PC-9 (cell line): ENCODE measurements at regions of chr20 and their contacts with region 1.

Region 1: GRCh38 chr20:31879143-31879987 is 8.9 kb downstream of the TTLL9 start:
- DNase-seq: peak; percentile 75 to 95
- H3K4me3 ChIP-seq: peak overlapping the region; percentile 60
- H3K27ac ChIP-seq: no peak overlapping the region
- H3K4me1 ChIP-seq: peaks cover 10% of the 10 kb centered on the region; the same call in 1 of the 2 replicates
- H3K27me3 ChIP-seq: peaks cover 15% of the 10 kb centered on the region
- CTCF ChIP-seq: no peak; the same call in 1 of the 2 replicates

Region 2: GRCh38 chr20:32554965-32555289 is 675.6 kb after region 1 on chr20:
- CTCF ChIA-PET with region 1: no interaction called
- POLR2A ChIA-PET with region 1: interaction called, 15 read pairs
- intact Hi-C with region 1: no loop called
- DNase-seq: no peak
- H3K4me3 ChIP-seq: no peak overlapping the region
- H3K27ac ChIP-seq: peak overlapping the region; percentile 61
- H3K4me1 ChIP-seq: peaks cover 18% of the 10 kb centered on the region
- H3K27me3 ChIP-seq: no peaks in the 10 kb centered on the region
- CTCF ChIP-seq: no peak